Heart right ventricle (tissue), 16 donors: ENCODE measurements at regions of chr4 and their contacts with region 1.

Region 1: GRCh38 chr4:97110506-97110905 is 1032.8 kb downstream of the STPG2 start:
- DNase-seq: no peak
- ATAC-seq: no peak
- H3K4me3 ChIP-seq: no peak overlapping the region
- H3K27ac ChIP-seq: no peak overlapping the region
- H3K4me1 ChIP-seq: no peaks in the 10 kb centered on the region
- H3K27me3 ChIP-seq: no peaks in the 10 kb centered on the region
- CTCF ChIP-seq: no peak

Region 2: DNA sequence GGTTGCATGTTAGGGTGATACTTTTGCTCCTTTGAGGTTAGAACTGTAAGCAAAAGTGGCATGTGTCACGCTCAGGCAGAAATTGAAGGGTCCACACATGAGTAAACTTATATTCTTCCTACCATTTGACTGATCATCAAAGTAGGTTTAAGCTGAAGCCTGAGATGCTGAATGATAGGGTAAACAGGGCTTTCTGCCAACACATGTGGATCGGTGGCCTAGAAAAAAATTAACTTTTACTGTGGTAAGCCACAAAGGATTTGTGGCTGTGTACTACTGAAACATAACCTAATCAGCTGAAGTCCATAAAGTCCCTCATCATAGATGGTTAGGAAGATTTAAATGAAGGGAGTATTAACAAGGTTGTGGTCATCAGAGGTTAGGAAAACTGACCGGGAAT is 37.3 kb before region 1 on chr4:
- intact Hi-C with region 1: loop called in 1 of 10 experiments (anchors 2 kb)
- DNase-seq: no peak
- ATAC-seq: no peak
- H3K4me3 ChIP-seq: no peak overlapping the region
- H3K27ac ChIP-seq: no peak overlapping the region
- H3K4me1 ChIP-seq: no peaks in the 10 kb centered on the region
- H3K27me3 ChIP-seq: no peaks in the 10 kb centered on the region
- CTCF ChIP-seq: no peak

Region 3: DNA sequence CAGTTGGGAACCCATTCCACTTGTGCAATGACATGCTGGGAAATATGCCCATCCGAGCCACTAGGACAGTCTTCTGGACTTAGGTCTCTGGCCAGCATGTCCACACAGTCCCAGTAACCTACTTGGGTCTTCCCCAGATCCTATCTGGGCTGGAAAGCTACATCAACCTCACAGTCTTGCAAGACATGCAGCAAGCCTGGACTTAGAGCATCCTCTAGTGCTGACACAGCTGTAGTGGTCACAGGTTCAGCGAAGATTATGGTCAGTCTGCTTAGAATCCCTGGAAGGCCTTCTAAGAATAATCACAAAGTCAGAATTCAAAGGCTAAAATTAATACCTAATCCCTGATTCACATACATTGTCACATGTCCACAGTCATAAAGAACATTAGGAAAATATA is 190.1 kb after region 1 on chr4:
- intact Hi-C with region 1: no loop called
- DNase-seq: no peak
- ATAC-seq: no peak
- H3K4me3 ChIP-seq: no peak overlapping the region
- H3K27ac ChIP-seq: no peak overlapping the region
- H3K4me1 ChIP-seq: no peaks in the 10 kb centered on the region
- H3K27me3 ChIP-seq: no peaks in the 10 kb centered on the region
- CTCF ChIP-seq: no peak